Esophagus muscularis mucosa (tissue), 4 donors: ENCODE measurements at regions of chr7 and their contacts with region 1.

Region 1: DNA sequence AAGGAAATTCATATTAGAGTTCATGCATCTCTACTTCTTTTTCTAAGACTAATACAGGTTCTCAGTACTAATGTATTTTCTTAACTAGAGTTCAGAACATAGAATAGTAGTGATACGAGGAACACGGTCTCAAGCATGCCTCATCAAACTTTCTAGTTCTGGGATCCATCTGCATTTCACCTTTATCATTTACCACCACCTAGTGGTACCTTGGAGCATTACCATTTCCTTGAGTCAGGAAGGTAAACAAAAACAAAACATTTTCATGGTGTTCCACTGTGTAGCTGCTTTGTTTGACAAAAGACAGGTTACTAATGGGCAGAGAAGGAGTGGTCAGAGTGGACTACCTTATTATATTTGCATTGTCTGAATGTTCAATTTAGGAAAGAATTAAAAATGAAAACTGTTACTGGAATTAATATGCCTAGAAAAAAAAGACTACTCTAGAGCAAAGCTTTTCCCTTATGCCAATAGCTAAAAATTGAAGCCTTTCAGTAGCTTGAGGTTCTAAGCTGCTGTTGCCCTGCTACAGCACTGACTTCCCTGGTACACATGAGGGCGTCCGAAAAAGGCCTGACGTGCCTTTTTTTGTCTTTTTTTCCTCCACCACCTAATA is 44.5 kb downstream of the STARD3NL start:
- DNase-seq: no peak
- H3K4me3 ChIP-seq: no peak overlapping the region
- H3K27ac ChIP-seq: peak overlapping the region in 3 of 4 donors; percentile 3 to 42 (median 42)
- H3K4me1 ChIP-seq: peaks cover 0 to 25% (median 19%) of the 10 kb centered on the region in 4 donors
- H3K27me3 ChIP-seq: no peaks in the 10 kb centered on the region
- CTCF ChIP-seq: peak; percentile 91 to 97 (median 93)
- EP300 ChIP-seq: no peak
- POLR2A ChIP-seq: no peak

Region 2: GRCh38 chr7:37901236-37901827 is 321.3 kb before region 1 on chr7:
- intact Hi-C with region 1: loop called (anchors 5 kb)
- DNase-seq: no peak
- H3K4me3 ChIP-seq: no peak overlapping the region
- H3K27ac ChIP-seq: peak overlapping the region in 1 of 4 donors; percentile 30
- H3K4me1 ChIP-seq: peaks cover 11 to 21% (median 16%) of the 10 kb centered on the region in 4 donors
- H3K27me3 ChIP-seq: no peaks in the 10 kb centered on the region
- CTCF ChIP-seq: peak; percentile 43 to 65 (median 57)
- EP300 ChIP-seq: no peak
- POLR2A ChIP-seq: no peak

Region 3: DNA sequence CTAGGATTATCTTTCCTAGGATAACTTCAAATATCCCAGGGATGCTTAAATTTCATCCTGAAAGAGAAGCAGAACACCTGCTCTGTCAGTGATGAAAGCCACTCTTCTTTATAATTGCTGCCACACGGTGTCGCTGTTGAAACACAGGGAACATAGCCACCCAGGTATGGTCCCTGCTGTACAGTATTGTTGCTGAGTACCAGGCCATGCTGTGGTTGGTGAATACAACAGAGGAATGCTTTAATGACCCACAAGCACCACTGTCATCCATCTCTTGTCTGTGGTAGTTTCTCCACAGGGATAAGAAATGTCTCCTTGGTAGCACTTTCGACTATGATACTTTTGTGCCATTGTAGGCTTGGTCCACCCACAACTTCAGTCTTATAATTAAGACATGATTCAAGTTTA is 115.1 kb before region 1 on chr7:
- intact Hi-C with region 1: loop called (anchors 2 kb)
- DNase-seq: no peak
- H3K4me3 ChIP-seq: no peak overlapping the region
- H3K27ac ChIP-seq: no peak overlapping the region
- H3K4me1 ChIP-seq: peaks cover 0 to 8% (median 0%) of the 10 kb centered on the region in 4 donors
- H3K27me3 ChIP-seq: no peaks in the 10 kb centered on the region
- CTCF ChIP-seq: peak; percentile 68 to 80 (median 75)
- EP300 ChIP-seq: no peak
- POLR2A ChIP-seq: no peak

Region 4: GRCh38 chr7:38186593-38187314 is 35.8 kb before region 1 on chr7:
- intact Hi-C with region 1: loop called (anchors 5 kb)
- DNase-seq: no peak
- H3K4me3 ChIP-seq: no peak overlapping the region
- H3K27ac ChIP-seq: no peak overlapping the region
- H3K4me1 ChIP-seq: peaks cover 18 to 63% (median 60%) of the 10 kb centered on the region in 4 donors
- H3K27me3 ChIP-seq: no peaks in the 10 kb centered on the region
- CTCF ChIP-seq: no peak
- EP300 ChIP-seq: no peak
- POLR2A ChIP-seq: no peak